Right ventricle myocardium inferior (tissue), 1 donor: ENCODE measurements at regions of chr15 and their contacts with region 1.

Region 1: DNA sequence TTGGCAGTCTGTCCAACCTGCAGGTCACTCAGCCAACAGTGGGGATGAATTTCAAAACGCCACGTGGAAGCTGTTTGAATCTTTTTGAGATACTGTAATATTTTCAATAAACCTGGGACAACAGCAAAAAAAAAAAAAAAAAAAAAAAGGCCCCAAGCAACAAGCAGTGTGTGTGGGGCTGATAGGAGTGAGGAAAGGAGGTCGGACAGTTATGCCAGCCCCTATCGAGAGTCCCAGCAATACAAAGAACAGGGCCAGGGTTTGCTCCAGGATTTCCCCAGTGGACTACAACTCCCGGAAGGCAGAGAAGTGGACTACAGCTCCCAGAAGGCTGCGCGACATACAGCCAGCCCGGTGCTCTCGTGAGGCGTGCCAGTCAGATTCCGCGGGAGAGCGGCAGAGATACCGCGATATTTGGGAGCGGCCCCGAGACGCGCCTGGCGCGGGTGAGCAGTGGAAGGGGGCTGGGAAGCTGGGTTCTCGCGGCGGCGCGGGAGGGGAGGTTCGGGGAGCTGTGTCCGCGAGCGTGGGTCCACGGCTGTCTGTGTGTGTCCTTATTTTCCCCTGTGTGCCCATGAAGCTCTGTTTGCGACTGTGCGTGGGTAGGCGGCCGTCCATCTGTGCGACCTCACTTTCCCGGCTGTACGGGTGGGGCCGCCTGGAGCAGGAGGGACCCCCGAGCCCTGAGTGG is at the start of gene PPCDC:
- DNase-seq: peak; percentile 98
- ATAC-seq: peak; percentile 98
- total RNA-seq, gene PPCDC: 5.2 TPM

Region 2: GRCh38 chr15:74956648-74957300 is 66.6 kb before region 1 on chr15 and contains the start of gene RPP25:
- intact Hi-C with region 1: loop called (anchors 2 kb)
- DNase-seq: peak; percentile 89
- ATAC-seq: peak; percentile 92
- total RNA-seq, gene RPP25: 2.7 TPM

Region 3: DNA sequence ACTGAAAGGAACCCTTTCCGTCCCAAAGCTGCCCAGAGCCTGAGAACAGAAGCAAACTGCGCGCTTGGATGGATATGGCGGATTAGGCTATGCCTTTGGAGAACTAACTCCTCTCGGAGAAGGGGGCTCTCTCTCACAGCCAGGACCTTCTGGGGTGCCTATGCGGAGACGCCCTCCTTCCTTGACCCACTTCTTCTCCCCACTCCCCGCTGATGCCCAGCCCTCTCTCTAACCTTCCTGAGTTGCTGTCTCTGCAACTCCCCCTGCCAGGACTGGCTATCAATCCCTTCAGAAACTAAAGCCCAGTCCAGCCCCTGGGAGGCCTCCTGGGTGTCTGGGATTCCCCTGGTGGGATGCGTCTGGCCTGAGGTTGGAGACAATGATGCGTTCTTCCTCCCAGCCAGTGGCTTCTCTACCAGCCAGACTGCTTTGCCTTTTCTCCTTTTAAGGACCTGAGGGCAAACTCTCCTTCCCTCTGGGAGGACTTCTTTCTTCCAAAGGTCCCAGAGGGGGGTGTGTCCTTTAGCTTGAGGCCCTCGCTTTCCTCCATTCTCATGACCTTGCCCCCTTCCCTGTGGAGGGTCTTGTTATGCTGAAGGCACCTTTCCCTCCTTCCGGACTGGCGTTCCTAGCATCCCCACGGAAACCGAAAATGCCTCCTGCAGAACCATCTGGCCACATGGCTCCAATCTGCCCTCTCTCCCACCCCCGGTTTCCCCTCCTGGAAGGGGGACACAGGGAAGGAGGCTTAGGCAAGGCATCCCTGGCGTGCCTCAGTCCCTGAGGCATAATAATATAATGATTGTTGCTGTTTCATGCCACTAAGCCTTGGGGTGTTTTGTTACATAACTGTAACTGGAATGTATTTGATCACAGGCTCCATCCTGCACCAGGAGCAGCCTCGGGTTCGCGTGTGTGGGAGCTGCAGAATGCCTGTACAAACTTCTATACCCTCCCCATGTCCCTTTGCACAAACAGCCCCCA is 115.0 kb after region 1 on chr15:
- intact Hi-C with region 1: no loop called
- DNase-seq: no peak
- ATAC-seq: no peak